ENCODE measurements at regions of chr12 and their contacts with region 1.

Region 1: GRCh38 chr12:119544765-119545625 is 48.6 kb upstream of the TMEM233 start:
- DNase-seq: peak; percentile 23 to 59
- ATAC-seq: peak in 7 of 8 donors; percentile 39 to 75 (median 67)
- H3K4me3 ChIP-seq: no peak overlapping the region
- H3K27ac ChIP-seq: no peak overlapping the region
- H3K4me1 ChIP-seq: no peaks in the 10 kb centered on the region
- H3K27me3 ChIP-seq: peaks cover 0 to 25% (median 5%) of the 10 kb centered on the region in 7 donors
- CTCF ChIP-seq: peak; percentile 78 to 91 (median 88)

Region 2: GRCh38 chr12:118299791-118300460 is 1245.1 kb before region 1 on chr12:
- intact Hi-C with region 1: no loop called
- DNase-seq: no peak
- ATAC-seq: no peak
- H3K4me3 ChIP-seq: no peak overlapping the region
- H3K27ac ChIP-seq: no peak overlapping the region
- H3K4me1 ChIP-seq: peaks cover 0 to 17% (median 4%) of the 10 kb centered on the region in 9 donors
- H3K27me3 ChIP-seq: no peaks in the 10 kb centered on the region
- CTCF ChIP-seq: no peak

Region 3: DNA sequence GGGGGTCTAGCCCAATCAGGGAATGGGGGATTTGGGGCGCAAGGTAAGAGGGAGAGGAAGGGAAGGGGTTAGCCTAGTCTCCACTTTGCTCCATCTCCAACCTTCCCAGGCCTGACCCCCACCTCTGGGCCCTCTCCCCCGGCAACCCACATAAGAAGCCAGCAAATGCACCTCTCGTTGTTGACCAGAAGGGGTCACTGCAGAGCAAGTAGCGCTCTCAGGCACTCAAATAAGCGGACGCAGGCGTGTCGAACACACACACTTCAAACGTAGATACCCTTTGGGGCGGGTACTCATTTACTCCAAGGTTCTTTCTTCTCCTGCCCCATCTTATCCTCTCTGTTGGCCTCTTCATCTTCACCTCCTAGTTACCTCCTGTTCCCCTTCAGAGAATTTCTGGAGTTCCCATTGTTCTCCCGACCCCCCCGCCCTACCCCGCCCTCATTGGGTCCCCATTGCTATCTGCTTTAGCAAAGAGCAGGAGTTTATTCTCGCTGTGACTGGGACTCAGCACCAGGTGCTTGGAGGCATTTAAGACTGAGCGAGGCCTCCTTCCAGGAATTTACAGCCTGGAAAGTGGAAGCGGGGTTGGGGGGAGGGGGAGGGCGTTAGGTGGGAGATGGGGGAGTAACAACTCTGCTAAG is 565.1 kb before region 1 on chr12:
- intact Hi-C with region 1: loop called in 6 of 10 experiments (anchors 5 to 10 kb)
- DNase-seq: peak in 1 of 2 donors; percentile 17
- ATAC-seq: peak in 5 of 8 donors; percentile 31 to 64 (median 53)
- H3K4me3 ChIP-seq: no peak overlapping the region
- H3K27ac ChIP-seq: no peak overlapping the region
- H3K4me1 ChIP-seq: peaks cover 0 to 16% (median 6%) of the 10 kb centered on the region in 9 donors
- H3K27me3 ChIP-seq: peaks cover 11 to 87% (median 70%) of the 10 kb centered on the region in 7 donors
- CTCF ChIP-seq: peak; percentile 33 to 74 (median 68)

Region 4: DNA sequence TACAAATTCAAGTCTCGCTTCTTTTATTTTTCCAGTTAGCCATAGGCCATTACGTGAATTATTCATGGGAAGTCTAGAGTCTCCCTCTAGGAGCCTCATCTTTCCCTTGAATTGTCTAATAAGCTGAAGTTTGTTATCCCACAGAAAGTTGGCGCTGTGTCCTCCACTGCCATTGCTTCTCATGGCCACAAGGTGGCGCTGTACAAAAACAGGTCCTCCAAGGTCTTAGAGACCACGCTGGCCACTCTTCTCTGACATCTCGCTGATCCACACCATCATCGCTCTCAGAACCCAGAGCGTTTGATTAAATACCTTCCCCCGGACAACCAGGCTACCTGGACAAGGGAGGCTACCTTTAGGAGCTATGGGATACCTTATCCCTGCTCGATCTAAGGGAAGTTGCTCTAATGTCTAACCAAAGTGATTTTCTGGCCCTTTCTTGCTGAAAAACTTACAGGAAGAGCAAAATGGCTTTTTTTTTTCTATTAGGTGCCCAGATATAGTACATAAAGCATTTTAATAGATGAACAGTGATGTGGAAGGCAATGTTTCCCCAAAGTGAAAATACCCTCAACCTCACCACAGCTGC is 100.4 kb before region 1 on chr12:
- intact Hi-C with region 1: loop called (anchors 2 to 10 kb)
- DNase-seq: peak; percentile 7 to 13
- ATAC-seq: peak in 1 of 8 donors; percentile 55
- H3K4me3 ChIP-seq: no peak overlapping the region
- H3K27ac ChIP-seq: no peak overlapping the region
- H3K4me1 ChIP-seq: no peaks in the 10 kb centered on the region
- H3K27me3 ChIP-seq: peaks cover 0 to 15% (median 0%) of the 10 kb centered on the region in 7 donors
- CTCF ChIP-seq: peak; percentile 58 to 96 (median 79)

Measured in heart right ventricle (tissue), 16 donors.